CD4-positive, alpha-beta memory T cell (primary cell): ENCODE measurements at regions of chr5 and their contacts with region 1.

Region 1: DNA sequence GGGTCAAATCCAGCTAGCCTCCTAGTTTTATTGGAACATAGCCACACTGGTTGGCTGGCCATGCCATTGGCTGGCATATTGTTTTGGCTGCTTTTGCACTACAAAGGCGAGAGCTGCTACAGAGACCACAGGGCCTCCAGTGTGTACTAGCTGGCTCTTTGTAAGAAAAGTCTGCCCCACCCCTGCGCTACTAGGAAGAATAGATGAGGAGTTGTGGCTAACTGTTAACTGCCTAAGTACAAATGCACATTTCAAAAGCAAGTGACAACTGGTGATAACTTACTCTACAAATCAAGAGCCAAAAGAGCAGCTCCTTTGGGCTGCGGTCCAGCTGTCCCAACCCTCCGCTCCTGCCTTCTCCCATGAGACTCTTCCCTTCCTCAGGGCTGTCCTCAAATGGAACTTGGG is 63.9 kb downstream of the SERINC5 start:
- DNase-seq: peak; percentile 56 to 73 (median 58)
- H3K4me3 ChIP-seq: peak overlapping the region; percentile 9 to 37
- H3K4me3 Mint-ChIP-seq: peak overlapping the region; percentile 64 to 89 (median 80)
- H3K27ac ChIP-seq: peak overlapping the region; percentile 69
- H3K27ac Mint-ChIP-seq: peak overlapping the region; percentile 88 to 97 (median 92)
- H3K4me1 ChIP-seq: peaks cover 94% of the 10 kb centered on the region
- H3K4me1 Mint-ChIP-seq: peaks cover 68 to 93% (median 81%) of the 10 kb centered on the region in 4 donors
- H3K27me3 ChIP-seq: no peaks in the 10 kb centered on the region
- H3K27me3 Mint-ChIP-seq: no peaks in the 10 kb centered on the region

Region 2: GRCh38 chr5:80125962-80126480 is 66.0 kb before region 1 on chr5:
- CTCF ChIA-PET with region 1: no interaction called
- POLR2A ChIA-PET with region 1: interaction called, 18 read pairs
- intact Hi-C with region 1: no loop called
- DNase-seq: peak in 1 of 5 donors; percentile 33
- H3K4me3 ChIP-seq: no peak overlapping the region
- H3K4me3 Mint-ChIP-seq: peak overlapping the region in 7 of 8 donors; percentile 8 to 82 (median 44)
- H3K27ac ChIP-seq: no peak overlapping the region
- H3K27ac Mint-ChIP-seq: peak overlapping the region; percentile 10 to 85 (median 64)
- H3K4me1 ChIP-seq: peaks cover 37% of the 10 kb centered on the region
- H3K4me1 Mint-ChIP-seq: peaks cover 47 to 67% (median 55%) of the 10 kb centered on the region in 4 donors
- H3K27me3 ChIP-seq: no peaks in the 10 kb centered on the region
- H3K27me3 Mint-ChIP-seq: no peaks in the 10 kb centered on the region

Region 3: GRCh38 chr5:80141147-80141671 is 50.8 kb before region 1 on chr5:
- CTCF ChIA-PET with region 1: interaction called, 6 read pairs
- POLR2A ChIA-PET with region 1: interaction called, 51 read pairs
- intact Hi-C with region 1: loop called (anchors 1 kb)
- DNase-seq: no peak
- H3K4me3 ChIP-seq: no peak overlapping the region
- H3K4me3 Mint-ChIP-seq: peak overlapping the region in 7 of 8 donors; percentile 18 to 82 (median 60)
- H3K27ac ChIP-seq: peak overlapping the region; percentile 37
- H3K27ac Mint-ChIP-seq: peak overlapping the region; percentile 89 to 96 (median 95)
- H3K4me1 ChIP-seq: peaks cover 86% of the 10 kb centered on the region
- H3K4me1 Mint-ChIP-seq: peaks cover 65 to 82% (median 75%) of the 10 kb centered on the region in 4 donors
- H3K27me3 ChIP-seq: no peaks in the 10 kb centered on the region
- H3K27me3 Mint-ChIP-seq: no peaks in the 10 kb centered on the region

Region 4: GRCh38 chr5:80172067-80172695 is 19.8 kb before region 1 on chr5:
- CTCF ChIA-PET with region 1: interaction called, 5 read pairs
- POLR2A ChIA-PET with region 1: interaction called, 136 read pairs
- intact Hi-C with region 1: no loop called
- DNase-seq: no peak
- H3K4me3 ChIP-seq: no peak overlapping the region
- H3K4me3 Mint-ChIP-seq: no peak overlapping the region
- H3K27ac ChIP-seq: no peak overlapping the region
- H3K27ac Mint-ChIP-seq: peak overlapping the region in 5 of 7 donors; percentile 6 to 86 (median 48)
- H3K4me1 ChIP-seq: peaks cover 39% of the 10 kb centered on the region
- H3K4me1 Mint-ChIP-seq: peaks cover 20 to 62% (median 37%) of the 10 kb centered on the region in 4 donors
- H3K27me3 ChIP-seq: no peaks in the 10 kb centered on the region
- H3K27me3 Mint-ChIP-seq: no peaks in the 10 kb centered on the region

Region 5: DNA sequence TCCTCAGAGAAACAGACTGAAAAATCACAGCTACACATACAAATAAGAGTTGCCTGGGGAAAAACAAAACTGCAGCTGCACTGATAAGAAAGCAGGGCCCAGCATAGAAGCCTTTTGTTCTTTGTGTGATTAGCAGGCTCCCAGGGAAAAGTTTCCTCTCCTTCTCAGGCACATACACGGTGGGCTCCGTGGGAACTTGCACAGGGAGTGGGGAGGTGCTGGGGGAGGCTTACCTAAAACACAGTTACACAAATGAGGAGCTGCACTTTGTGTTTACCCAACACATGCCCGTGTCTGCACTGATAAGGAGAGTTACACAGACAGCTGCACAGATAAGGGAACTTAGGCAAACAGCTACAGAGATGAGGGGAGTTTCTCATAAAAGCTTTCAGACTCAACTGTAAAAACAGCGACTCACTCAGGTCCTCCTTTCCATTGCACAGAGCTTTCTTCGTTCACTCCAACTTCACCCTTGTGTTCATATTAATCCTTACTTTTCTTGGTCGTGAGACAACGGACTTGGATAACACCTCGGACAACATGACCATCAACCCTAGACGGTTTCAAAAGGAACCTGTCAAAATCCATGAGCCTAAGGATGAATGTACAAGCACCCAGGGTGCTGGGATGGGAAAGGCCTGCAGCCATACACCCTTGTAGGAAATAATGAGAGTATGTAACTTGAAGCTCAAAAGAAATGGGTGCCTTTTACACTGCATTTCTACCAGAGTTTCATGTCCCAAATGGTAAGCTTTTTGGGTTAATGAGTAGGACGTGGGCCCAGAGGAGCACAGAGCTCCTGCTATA is 13.0 kb after region 1 on chr5:
- CTCF ChIA-PET with region 1: interaction called, 24 read pairs
- POLR2A ChIA-PET with region 1: interaction called, 103 read pairs
- intact Hi-C with region 1: loop called (anchors 2 kb)
- DNase-seq: no peak
- H3K4me3 ChIP-seq: no peak overlapping the region
- H3K4me3 Mint-ChIP-seq: peak overlapping the region; percentile 40 to 71 (median 58)
- H3K27ac ChIP-seq: peak overlapping the region; percentile 16
- H3K27ac Mint-ChIP-seq: peak overlapping the region; percentile 81 to 99 (median 88)
- H3K4me1 ChIP-seq: peaks cover 82% of the 10 kb centered on the region
- H3K4me1 Mint-ChIP-seq: peaks cover 72 to 94% (median 82%) of the 10 kb centered on the region in 4 donors
- H3K27me3 ChIP-seq: no peaks in the 10 kb centered on the region
- H3K27me3 Mint-ChIP-seq: no peaks in the 10 kb centered on the region

Region 6: DNA sequence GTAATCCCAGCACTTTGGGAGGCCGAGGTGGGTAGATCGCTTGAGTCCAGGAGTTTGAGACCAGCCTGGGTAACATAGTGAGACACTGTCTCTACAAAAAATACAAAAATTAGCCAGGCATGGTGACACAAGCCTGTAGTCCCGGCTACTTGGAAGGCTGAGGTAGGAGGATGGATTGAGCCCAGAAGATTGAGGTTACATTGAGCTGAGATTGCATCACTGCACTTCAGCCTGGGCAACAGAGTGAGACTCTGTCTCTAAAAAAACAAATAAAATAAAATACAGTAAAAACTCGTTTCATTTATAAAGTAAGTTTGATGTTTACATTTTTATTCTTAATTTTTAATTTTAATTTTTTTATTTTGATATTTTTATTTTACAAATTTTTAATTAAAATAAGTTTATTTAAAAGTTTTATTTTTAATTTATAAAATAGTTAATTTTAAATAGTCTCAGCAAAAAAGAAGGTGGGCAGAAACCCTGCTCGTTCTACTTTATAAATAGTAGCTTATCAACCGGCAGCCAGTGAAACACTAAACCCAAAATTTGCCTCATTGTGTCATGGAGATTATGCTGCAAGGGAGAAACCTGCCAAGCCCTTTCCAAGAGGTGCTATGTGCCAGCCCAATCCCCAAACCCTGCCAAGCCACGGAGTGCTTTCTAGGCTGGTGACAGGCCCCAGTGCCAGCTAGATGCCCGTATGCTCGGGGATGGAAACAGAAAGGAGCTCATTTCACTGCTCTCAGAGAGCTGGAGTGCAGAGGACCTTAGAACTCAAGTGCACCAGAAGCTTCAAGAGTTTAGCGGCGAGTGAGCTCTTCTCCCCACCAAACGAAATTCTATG is 25.0 kb after region 1 on chr5:
- CTCF ChIA-PET with region 1: interaction called, 4 read pairs
- POLR2A ChIA-PET with region 1: interaction called, 13 read pairs
- intact Hi-C with region 1: no loop called
- DNase-seq: peak in 1 of 5 donors; percentile 55
- H3K4me3 ChIP-seq: peak overlapping the region in 1 of 2 donors; percentile 25
- H3K4me3 Mint-ChIP-seq: peak overlapping the region in 7 of 8 donors; percentile 46 to 96 (median 81)
- H3K27ac ChIP-seq: peak overlapping the region; percentile 37
- H3K27ac Mint-ChIP-seq: peak overlapping the region; percentile 31 to 99 (median 93)
- H3K4me1 ChIP-seq: peaks cover 98% of the 10 kb centered on the region
- H3K4me1 Mint-ChIP-seq: peaks cover 75 to 97% (median 86%) of the 10 kb centered on the region in 4 donors
- H3K27me3 ChIP-seq: no peaks in the 10 kb centered on the region
- H3K27me3 Mint-ChIP-seq: no peaks in the 10 kb centered on the region